Left lung (tissue), 14 donors: ENCODE measurements at regions of chr15 and their contacts with region 1.

Region 1: DNA sequence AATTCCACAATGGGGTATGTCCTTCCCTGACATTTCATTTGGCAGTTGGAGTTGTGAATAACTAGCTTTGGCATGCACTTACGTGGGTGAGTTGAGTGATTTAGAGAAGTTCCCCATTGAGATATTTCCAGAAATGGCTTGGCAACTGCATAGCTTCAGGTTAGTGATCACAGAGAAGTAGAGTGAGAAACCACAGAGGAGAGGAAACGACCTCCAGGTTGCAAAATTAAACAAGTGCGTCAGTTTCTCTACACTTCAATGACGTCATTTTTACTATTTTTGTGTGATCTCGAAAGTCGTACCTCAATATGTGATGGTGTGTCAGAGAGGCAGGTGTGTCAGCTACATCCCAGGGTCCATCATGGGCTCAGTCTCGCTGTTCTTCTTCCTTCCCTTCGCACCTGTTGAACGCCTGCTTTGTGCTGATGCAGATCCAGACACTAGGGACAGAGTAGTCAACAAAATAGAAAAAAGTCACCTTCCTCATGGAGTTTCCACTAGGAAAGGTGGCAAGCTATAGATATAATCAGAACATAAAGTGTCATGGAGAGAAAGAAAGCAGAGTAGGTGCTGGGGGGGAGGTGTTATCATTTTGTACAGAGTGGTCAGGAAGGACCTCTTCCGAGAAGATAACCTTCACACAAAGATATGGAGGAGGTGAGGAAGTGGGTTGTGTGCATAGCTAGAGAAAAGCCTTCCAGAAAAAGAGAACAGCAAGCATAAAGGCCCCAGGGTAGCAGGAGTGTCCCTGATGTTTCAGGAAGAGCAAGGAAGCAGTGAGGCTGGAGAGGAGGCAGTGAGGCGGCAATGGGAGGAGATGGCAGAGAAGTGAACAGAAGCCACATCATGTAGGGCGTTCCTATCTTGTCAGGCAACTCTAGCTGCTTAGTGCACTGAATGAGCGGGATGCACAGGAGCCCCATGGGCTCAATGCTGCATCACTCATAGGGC is 75.6 kb downstream of the MCTP2 start:
- DNase-seq: no peak
- ATAC-seq: peak; percentile 86
- H3K4me3 ChIP-seq: no peak overlapping the region
- H3K27ac ChIP-seq: peak overlapping the region; percentile 4 to 24
- H3K4me1 ChIP-seq: peaks cover 0 to 7% of the 10 kb centered on the region in 2 donors
- H3K27me3 ChIP-seq: no peaks in the 10 kb centered on the region
- CTCF ChIP-seq: no peak

Region 2: DNA sequence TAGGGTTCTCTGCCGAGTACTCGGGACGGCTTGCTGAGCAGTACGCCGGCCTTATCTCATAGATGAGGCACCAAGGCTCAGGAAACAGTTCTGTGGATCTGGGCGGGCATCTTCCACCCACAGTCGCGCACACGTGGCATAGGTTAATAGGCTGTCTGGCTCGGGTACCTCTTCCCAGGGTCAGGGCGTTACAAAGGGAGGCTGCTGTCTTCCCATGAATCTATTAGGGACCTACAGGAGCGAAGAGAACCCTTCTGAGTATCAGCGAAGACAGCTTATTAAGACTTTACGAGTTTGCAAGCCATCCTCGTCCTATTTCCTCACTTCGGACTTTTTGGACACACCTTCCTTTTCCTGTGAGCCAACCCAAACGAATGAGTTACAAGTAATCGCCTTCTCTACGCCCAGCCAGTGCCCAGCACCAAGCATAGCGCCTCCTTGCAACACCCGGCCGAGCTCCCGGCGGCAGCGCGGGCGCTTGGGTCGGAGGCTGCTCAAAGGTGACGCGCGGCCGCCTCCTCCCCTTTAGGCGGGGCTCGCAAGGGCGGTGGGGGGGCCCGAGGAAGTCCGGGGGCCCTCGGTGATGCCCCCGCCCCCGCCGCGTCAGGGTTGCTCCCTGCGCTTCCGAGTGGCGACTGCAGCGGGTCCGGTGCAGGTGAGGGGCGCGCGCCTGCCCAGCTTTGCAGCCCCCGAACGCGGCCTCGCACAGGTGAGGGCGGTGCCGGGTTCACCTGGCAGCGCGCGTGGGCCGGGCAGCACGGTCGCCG is 75.8 kb before region 1 on chr15 and contains the start of gene MCTP2:
- intact Hi-C with region 1: no loop called
- DNase-seq: peak; percentile 57 to 98 (median 89)
- ATAC-seq: peak; percentile 94
- H3K4me3 ChIP-seq: peak within 1 kb of the TSS; percentile 60 to 68
- H3K27ac ChIP-seq: peak within 1 kb of the TSS; percentile 88 to 95
- H3K4me1 ChIP-seq: peaks cover 0 to 61% of the 10 kb centered on the region in 2 donors
- H3K27me3 ChIP-seq: peaks cover 0 to 22% of the 10 kb centered on the region in 2 donors
- CTCF ChIP-seq: no peak
- polyA plus RNA-seq, gene MCTP2: 25.9 to 38.1 (median 35.0) TPM

Region 3: GRCh38 chr15:94258246-94258645 is 48.7 kb before region 1 on chr15:
- intact Hi-C with region 1: loop called in 1 of 2 experiments (anchors 10 kb)
- DNase-seq: no peak
- ATAC-seq: no peak
- H3K4me3 ChIP-seq: no peak overlapping the region
- H3K27ac ChIP-seq: no peak overlapping the region
- H3K4me1 ChIP-seq: peaks cover 0 to 52% of the 10 kb centered on the region in 2 donors
- H3K27me3 ChIP-seq: no peaks in the 10 kb centered on the region
- CTCF ChIP-seq: no peak

Region 4: GRCh38 chr15:94509259-94509658 is 202.3 kb after region 1 on chr15:
- intact Hi-C with region 1: no loop called
- DNase-seq: no peak
- ATAC-seq: no peak
- H3K4me3 ChIP-seq: no peak overlapping the region
- H3K27ac ChIP-seq: no peak overlapping the region
- H3K4me1 ChIP-seq: no peaks in the 10 kb centered on the region
- H3K27me3 ChIP-seq: no peaks in the 10 kb centered on the region
- CTCF ChIP-seq: no peak